GM12878 (cell line): ENCODE measurements at regions of chr10 and their contacts with region 1.

Region 1: DNA sequence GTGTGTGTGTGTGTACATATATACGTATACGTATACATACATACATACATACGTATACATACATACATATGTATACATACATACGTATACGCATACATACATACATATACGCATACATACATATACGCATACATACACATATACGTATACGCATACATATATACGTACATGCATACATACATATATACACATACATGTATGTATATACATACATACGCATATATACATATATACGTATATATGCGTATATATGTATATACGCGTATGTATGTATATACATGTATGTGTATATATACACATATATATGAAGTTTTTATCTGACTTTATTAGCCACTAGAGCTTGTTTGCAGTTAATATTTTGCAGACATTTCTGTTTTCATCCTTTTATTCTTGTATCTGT is 63.3 kb downstream of the TBC1D12 start:
- DNase-seq: no peak
- ATAC-seq: no peak
- H3K4me3 ChIP-seq: no peak overlapping the region
- H3K27ac ChIP-seq: no peak overlapping the region
- H3K4me1 ChIP-seq: no peaks in the 10 kb centered on the region
- H3K27me3 ChIP-seq: no peaks in the 10 kb centered on the region
- CTCF ChIP-seq: no peak
- EP300 ChIP-seq: no peak
- POLR2A ChIP-seq: no peak
- RAD21 ChIP-seq: no peak

Region 2: DNA sequence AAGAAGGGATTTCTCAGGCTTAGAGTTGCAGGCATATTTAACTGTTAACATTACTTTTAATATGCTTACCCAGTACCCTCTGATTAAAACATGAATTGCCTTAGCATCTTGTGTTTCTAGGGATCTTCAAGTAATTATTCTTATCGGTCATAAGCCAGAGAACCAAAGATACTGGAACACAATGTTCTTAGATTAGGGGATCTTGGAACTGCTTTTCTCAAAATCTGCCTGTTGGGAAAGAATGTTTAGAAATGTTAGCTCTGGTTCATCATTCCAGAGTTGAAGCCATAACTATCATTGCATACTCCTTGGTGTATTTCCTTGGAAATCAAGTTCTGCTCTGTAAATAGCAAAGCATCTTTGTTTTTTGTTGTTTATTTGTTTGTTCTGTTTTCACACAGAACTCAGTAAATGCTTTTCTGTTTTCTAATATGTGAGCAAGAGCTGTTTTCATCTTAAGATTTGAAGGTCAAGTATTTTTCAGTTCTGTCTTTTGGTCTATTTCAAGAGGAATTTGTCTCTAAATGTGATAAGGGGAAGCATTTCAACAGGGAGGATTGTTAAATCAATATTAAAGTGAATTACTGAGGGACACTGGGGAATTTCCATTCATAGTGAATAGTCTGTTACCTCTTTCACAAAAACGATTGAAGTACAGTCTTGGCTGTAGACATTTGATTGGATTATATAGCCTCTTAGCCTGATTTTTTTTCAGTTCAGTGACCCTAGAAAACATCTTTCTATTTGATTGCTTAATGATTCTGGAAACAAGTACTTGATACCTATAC is 1508.3 kb before region 1 on chr10:
- CTCF ChIA-PET with region 1: no interaction called
- POLR2A ChIA-PET with region 1: interaction called, 10 read pairs
- RAD21 ChIA-PET with region 1: no interaction called
- SMC1A ChIA-PET with region 1: no interaction called
- in situ Hi-C with region 1: no loop called
- intact Hi-C with region 1: no loop called
- DNase-seq: no peak
- ATAC-seq: no peak
- H3K4me3 ChIP-seq: no peak overlapping the region
- H3K27ac ChIP-seq: no peak overlapping the region
- H3K4me1 ChIP-seq: no peaks in the 10 kb centered on the region
- H3K27me3 ChIP-seq: no peaks in the 10 kb centered on the region
- CTCF ChIP-seq: no peak
- EP300 ChIP-seq: no peak
- POLR2A ChIP-seq: no peak
- RAD21 ChIP-seq: no peak

Region 3: GRCh38 chr10:94489107-94489506 is 23.4 kb after region 1 on chr10:
- CTCF ChIA-PET with region 1: no interaction called
- POLR2A ChIA-PET with region 1: no interaction called
- RAD21 ChIA-PET with region 1: no interaction called
- SMC1A ChIA-PET with region 1: no interaction called
- in situ Hi-C with region 1: no loop called
- intact Hi-C with region 1: no loop called
- DNase-seq: no peak
- ATAC-seq: no peak
- H3K4me3 ChIP-seq: no peak overlapping the region
- H3K27ac ChIP-seq: no peak overlapping the region
- H3K4me1 ChIP-seq: no peaks in the 10 kb centered on the region
- H3K27me3 ChIP-seq: no peaks in the 10 kb centered on the region
- CTCF ChIP-seq: no peak
- EP300 ChIP-seq: no peak
- POLR2A ChIP-seq: no peak
- RAD21 ChIP-seq: no peak